GM10248 (cell line): ENCODE measurements at regions of chr12 and their contacts with region 1.

Region 1: DNA sequence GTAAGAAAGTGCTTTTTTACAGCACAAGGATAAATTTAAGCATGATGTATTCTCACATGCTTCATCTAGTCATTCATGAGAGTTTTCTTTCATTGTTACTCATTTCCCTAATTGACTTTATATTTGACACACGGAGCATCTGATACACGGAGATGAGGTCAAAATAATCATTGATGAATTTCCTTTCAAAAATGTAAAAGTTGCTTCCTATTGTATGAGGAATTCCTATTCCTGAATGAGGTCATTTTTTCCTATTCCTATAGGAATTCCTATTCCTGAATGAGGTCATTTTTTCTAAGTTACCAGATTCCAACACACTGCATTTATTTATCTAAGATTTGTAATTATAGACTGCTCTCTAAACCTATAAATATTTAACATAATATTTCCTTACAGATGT is 316.7 kb upstream of the KITLG start:
- DNase-seq: no peak
- CTCF ChIP-seq: no peak

Region 2: DNA sequence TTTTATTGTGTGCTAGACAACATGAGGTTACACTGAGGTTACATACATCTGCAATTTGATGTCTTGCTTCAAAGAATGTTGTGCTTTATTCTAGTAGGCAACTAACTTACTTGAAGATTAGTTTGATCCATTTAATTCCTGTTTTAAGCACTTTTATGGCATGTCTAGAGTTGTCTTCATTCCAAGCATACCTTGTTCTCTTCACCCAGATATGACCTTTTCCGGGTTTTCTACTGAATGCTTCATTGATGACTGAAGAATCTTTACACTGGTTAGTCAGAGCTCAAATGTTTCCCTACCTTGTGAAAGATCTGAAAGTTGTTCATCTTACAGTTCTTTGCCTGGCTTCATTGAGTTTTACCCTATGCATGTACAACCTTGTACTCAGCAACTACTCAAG is 42.7 kb before region 1 on chr12:
- CTCF ChIA-PET with region 1: no interaction called
- POLR2A ChIA-PET with region 1: no interaction called
- DNase-seq: no peak
- CTCF ChIP-seq: no peak

Region 3: GRCh38 chr12:88884600-88884999 is 12.4 kb before region 1 on chr12:
- CTCF ChIA-PET with region 1: interaction called, 16 read pairs
- POLR2A ChIA-PET with region 1: no interaction called
- DNase-seq: peak; percentile 7
- CTCF ChIP-seq: no peak

Region 4: GRCh38 chr12:88914967-88915366 is 18.0 kb after region 1 on chr12:
- CTCF ChIA-PET with region 1: no interaction called
- POLR2A ChIA-PET with region 1: no interaction called
- DNase-seq: no peak
- CTCF ChIP-seq: no peak

Region 5: DNA sequence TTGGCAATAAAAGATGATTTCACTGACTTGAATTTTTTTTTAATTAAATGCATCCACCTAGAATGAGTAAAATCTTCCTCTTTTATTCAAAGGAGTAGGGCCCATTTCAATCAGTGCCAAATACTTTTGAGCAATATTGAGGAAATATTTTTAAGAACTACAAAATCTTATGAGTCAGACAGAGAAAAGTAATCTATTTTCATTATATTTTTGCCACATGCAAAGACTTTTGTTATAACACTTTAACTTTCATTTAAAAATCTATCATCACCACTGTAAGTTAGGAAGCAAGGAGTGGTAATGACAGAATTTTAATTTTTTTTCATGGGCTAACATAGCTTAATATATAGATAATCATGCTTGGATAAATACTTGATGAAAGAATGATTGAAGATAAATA is 28.5 kb after region 1 on chr12:
- CTCF ChIA-PET with region 1: no interaction called
- POLR2A ChIA-PET with region 1: no interaction called
- DNase-seq: no peak
- CTCF ChIP-seq: no peak

Region 6: GRCh38 chr12:89589753-89590152 is 692.8 kb after region 1 on chr12:
- CTCF ChIA-PET with region 1: no interaction called
- POLR2A ChIA-PET with region 1: no interaction called
- DNase-seq: no peak
- CTCF ChIP-seq: no peak